MCF 10A (cell line): ENCODE measurements at regions of chr20 and their contacts with region 1.

Region 1: DNA sequence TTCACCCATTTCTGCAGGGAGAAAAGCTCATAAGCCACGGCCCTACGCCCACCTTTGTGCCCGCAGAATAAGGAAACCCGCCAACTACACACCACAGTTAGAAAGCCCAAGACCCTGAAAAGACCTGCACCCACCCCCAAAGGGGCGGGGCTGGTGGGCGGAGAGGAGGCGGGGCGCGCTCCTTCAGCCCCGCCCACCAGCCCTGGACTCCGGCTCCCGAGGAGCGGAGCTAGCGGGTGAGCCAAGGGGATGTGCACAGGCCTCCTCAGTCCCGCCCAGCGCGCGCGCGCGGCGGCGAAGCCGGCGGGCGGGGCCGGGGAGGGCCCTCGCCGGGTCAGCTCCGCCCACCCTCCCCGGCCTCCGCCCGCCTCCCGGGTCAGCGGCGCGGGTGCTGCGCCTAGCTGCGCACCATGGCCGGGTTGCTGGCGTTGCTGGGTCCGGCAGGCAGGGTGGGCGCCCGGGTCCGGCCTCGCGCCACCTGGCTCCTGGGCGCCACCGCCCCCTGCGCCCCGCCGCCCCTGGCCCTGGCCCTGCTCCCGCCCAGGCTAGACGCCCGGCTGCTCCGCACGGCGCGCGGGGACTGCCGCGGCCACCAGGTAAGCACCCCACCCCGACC is at the start of gene FAM210B:
- DNase-seq: peak; percentile 90
- H3K4me3 Mint-ChIP-seq: peak within 1 kb of the TSS; percentile 84
- H3K27ac Mint-ChIP-seq: peak within 1 kb of the TSS; percentile 30
- H3K4me1 Mint-ChIP-seq: peaks cover 11% of the 10 kb centered on the region
- H3K27me3 Mint-ChIP-seq: no peaks in the 10 kb centered on the region
- CTCF ChIP-seq: no peak
- total RNA-seq, gene FAM210B: 37.7 and 38.2 TPM in 2 replicates

Region 2: GRCh38 chr20:55173601-55174000 is 1185.1 kb before region 1 on chr20:
- CTCF ChIA-PET with region 1: no interaction called
- POLR2A ChIA-PET with region 1: no interaction called
- intact Hi-C with region 1: no loop called
- DNase-seq: no peak
- H3K4me3 Mint-ChIP-seq: no peak overlapping the region
- H3K27ac Mint-ChIP-seq: no peak overlapping the region
- H3K4me1 Mint-ChIP-seq: no peaks in the 10 kb centered on the region
- H3K27me3 Mint-ChIP-seq: no peaks in the 10 kb centered on the region
- CTCF ChIP-seq: no peak

Region 3: GRCh38 chr20:56257604-56258003 is 101.1 kb before region 1 on chr20:
- CTCF ChIA-PET with region 1: interaction called, 4 read pairs
- POLR2A ChIA-PET with region 1: interaction called, 10 read pairs
- intact Hi-C with region 1: no loop called
- DNase-seq: no peak
- H3K4me3 Mint-ChIP-seq: no peak overlapping the region
- H3K27ac Mint-ChIP-seq: no peak overlapping the region
- H3K4me1 Mint-ChIP-seq: peaks cover 7% of the 10 kb centered on the region
- H3K27me3 Mint-ChIP-seq: peaks cover 17% of the 10 kb centered on the region
- CTCF ChIP-seq: no peak

Region 4: DNA sequence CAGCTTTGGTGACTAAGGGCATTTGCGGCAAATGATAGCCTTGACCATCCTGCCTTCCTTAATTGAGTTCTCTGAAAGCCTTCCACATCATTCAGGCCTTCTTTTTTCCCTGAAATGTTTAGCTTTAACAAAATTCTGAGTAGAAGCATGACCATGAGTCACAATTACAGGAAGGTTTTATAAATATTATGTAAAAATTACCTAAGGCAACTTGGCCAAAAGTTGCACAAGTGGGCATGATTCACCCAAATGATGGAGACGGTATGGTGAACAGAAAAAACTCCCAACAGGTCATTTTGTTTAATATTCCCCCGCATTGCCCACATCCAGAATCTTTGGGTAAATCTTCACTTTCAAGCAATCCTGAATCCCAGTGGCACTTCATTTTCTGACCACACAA is 73.2 kb before region 1 on chr20:
- CTCF ChIA-PET with region 1: interaction called, 11 read pairs
- POLR2A ChIA-PET with region 1: interaction called, 23 read pairs
- intact Hi-C with region 1: no loop called
- DNase-seq: peak; percentile 84
- H3K4me3 Mint-ChIP-seq: no peak overlapping the region
- H3K27ac Mint-ChIP-seq: peak overlapping the region; percentile 79
- H3K4me1 Mint-ChIP-seq: peaks cover 24% of the 10 kb centered on the region
- H3K27me3 Mint-ChIP-seq: no peaks in the 10 kb centered on the region
- CTCF ChIP-seq: no peak

Region 5: DNA sequence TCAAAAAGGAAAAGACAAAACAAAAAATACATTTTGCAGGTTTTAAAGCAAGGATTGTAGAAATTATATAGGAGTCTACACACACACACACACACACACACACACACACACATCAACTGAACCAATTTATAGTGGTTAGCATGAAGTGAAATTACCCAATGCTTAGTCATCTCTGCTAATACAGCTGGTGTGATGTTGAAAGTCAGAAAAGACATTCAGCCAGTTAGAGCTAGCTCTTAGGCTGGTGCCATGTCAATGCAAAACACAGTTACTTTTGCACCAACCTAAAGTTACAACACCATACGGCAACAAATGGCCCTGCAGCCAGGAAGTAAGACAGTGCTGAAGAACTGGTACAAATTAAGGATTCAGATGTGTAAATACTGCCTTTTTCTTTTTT is 15.2 kb after region 1 on chr20:
- CTCF ChIA-PET with region 1: interaction called, 84 read pairs
- POLR2A ChIA-PET with region 1: interaction called, 115 read pairs
- intact Hi-C with region 1: no loop called
- DNase-seq: peak; percentile 93
- H3K4me3 Mint-ChIP-seq: peak overlapping the region; percentile 46
- H3K27ac Mint-ChIP-seq: peak overlapping the region; percentile 78
- H3K4me1 Mint-ChIP-seq: peaks cover 14% of the 10 kb centered on the region
- H3K27me3 Mint-ChIP-seq: no peaks in the 10 kb centered on the region
- CTCF ChIP-seq: no peak

Region 6: GRCh38 chr20:56380375-56380774 is 21.7 kb after region 1 on chr20:
- CTCF ChIA-PET with region 1: interaction called, 84 read pairs
- POLR2A ChIA-PET with region 1: interaction called, 115 read pairs
- intact Hi-C with region 1: no loop called
- DNase-seq: no peak
- H3K4me3 Mint-ChIP-seq: no peak overlapping the region
- H3K27ac Mint-ChIP-seq: no peak overlapping the region
- H3K4me1 Mint-ChIP-seq: peaks cover 17% of the 10 kb centered on the region
- H3K27me3 Mint-ChIP-seq: no peaks in the 10 kb centered on the region
- CTCF ChIP-seq: no peak

Region 7: GRCh38 chr20:56513161-56514150 is 154.8 kb after region 1 on chr20:
- CTCF ChIA-PET with region 1: no interaction called
- POLR2A ChIA-PET with region 1: no interaction called
- intact Hi-C with region 1: no loop called
- DNase-seq: no peak
- H3K4me3 Mint-ChIP-seq: no peak overlapping the region
- H3K27ac Mint-ChIP-seq: no peak overlapping the region
- H3K4me1 Mint-ChIP-seq: no peaks in the 10 kb centered on the region
- H3K27me3 Mint-ChIP-seq: no peaks in the 10 kb centered on the region
- CTCF ChIP-seq: no peak